B cell (primary cell): ENCODE measurements at regions of chr10 and their contacts with region 1.

Region 1: DNA sequence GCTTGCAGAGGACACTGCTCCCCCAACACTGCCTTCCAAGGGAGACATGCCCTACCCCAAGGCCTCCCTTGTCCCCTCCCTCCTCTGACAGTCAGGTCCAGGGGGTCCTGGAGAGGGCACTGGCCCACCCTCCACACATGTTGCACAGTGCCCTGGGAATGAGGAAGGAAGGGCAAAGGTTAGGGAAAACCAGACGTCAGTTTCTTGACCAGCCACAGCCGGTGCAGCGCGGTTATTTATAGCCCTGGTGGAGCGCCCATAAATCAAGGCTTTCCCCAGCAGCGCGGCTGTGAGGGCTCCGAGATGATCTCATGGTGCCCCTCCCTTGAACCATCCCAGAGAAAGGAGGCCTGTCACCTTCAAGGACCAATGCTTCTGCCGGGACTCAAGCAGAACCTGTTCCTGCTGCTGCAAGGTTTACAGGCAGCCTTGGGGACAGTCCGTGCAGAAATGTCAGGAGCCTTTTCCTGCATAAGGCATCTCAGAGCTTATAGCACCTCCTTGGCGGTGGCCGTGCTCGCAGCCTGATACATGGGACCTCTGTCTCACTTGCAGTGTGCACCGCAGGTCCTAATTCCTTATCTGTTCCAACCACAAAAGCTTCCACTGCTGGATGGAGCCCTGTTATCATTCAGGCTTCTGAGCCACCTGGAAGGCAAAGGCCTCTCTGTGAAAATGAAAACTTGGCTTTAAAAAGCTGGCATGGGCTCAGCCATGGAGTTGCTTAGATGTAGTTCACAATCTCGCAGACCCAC is 127.3 kb downstream of the LHPP start:
- DNase-seq: no peak
- ATAC-seq: peak; percentile 18
- H3K4me3 ChIP-seq: no peak overlapping the region
- H3K4me3 Mint-ChIP-seq: peak overlapping the region; percentile 45
- H3K27ac ChIP-seq: no peak overlapping the region
- H3K27ac Mint-ChIP-seq: peak overlapping the region; percentile 50
- H3K4me1 ChIP-seq: peaks cover 44 to 48% of the 10 kb centered on the region in 2 donors
- H3K4me1 Mint-ChIP-seq: peaks cover 58% of the 10 kb centered on the region
- H3K27me3 ChIP-seq: no peaks in the 10 kb centered on the region
- H3K27me3 Mint-ChIP-seq: no peaks in the 10 kb centered on the region
- CTCF ChIP-seq: no peak

Region 2: GRCh38 chr10:124418726-124419501 is 170.0 kb before region 1 on chr10 and contains the start of gene OAT:
- CTCF ChIA-PET with region 1: no interaction called
- POLR2A ChIA-PET with region 1: no interaction called
- intact Hi-C with region 1: no loop called
- DNase-seq: peak; percentile 98
- ATAC-seq: peak; percentile 97
- H3K4me3 ChIP-seq: peak within 1 kb of the TSS; percentile 26 to 83 (median 64)
- H3K4me3 Mint-ChIP-seq: peak within 1 kb of the TSS; percentile 85
- H3K27ac ChIP-seq: peak within 1 kb of the TSS; percentile 51 to 80
- H3K27ac Mint-ChIP-seq: peak within 1 kb of the TSS; percentile 84
- H3K4me1 ChIP-seq: peaks cover 10 to 13% of the 10 kb centered on the region in 2 donors
- H3K4me1 Mint-ChIP-seq: peaks cover 16% of the 10 kb centered on the region
- H3K27me3 ChIP-seq: peaks cover 0 to 23% (median 5%) of the 10 kb centered on the region in 4 experiments
- H3K27me3 Mint-ChIP-seq: peaks cover 16% of the 10 kb centered on the region
- CTCF ChIP-seq: no peak
- total RNA-seq, gene OAT: 16.9 and 20.1 TPM in 2 replicates

Region 3: DNA sequence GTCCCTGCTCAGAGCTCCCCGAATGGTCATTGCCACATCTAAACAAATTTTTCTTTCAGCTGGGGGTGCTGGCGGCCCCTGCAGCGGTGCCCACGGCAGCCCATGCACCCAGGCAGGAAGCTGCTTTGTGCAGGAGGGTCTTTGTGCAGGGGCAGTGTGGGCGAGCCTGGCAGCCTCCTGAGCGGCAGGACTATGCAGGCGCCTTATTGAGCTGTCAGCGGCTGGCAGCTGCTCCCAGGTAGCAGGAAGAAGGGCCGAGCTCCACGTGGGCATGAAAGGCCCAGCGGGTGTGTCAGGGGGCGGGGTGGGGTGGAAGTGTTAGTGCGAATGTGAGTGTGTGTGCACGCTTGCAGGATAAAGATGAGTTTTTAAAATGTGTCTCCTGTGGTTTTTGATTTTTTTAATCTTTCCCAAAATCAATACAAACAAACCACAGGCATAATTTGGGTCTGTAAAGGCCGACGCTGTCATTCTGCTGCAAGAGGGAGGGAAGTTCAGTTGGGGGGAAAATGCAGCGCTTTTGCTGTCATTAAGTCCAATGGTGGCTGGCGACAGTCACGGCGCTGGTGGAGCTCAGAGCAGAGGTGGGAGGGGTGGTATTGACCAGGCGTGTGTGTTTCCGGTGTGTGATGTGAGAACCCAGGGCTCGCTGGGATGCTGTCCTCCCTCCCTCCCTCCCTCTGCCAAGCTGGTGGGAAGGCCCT is 43.4 kb before region 1 on chr10:
- CTCF ChIA-PET with region 1: interaction called, 4 read pairs
- POLR2A ChIA-PET with region 1: interaction called, 5 read pairs
- intact Hi-C with region 1: loop called (anchors 5 kb)
- DNase-seq: no peak
- ATAC-seq: no peak
- H3K4me3 ChIP-seq: peak overlapping the region in 4 of 5 experiments; percentile 13 to 34 (median 22)
- H3K4me3 Mint-ChIP-seq: peak overlapping the region; percentile 78
- H3K27ac ChIP-seq: peak overlapping the region; percentile 64 to 70
- H3K27ac Mint-ChIP-seq: peak overlapping the region; percentile 91
- H3K4me1 ChIP-seq: peaks cover 98 to 100% of the 10 kb centered on the region in 2 donors
- H3K4me1 Mint-ChIP-seq: peaks cover 91% of the 10 kb centered on the region
- H3K27me3 ChIP-seq: no peaks in the 10 kb centered on the region
- H3K27me3 Mint-ChIP-seq: no peaks in the 10 kb centered on the region
- CTCF ChIP-seq: no peak

Region 4: GRCh38 chr10:124619195-124619594 is 30.3 kb after region 1 on chr10:
- CTCF ChIA-PET with region 1: no interaction called
- POLR2A ChIA-PET with region 1: interaction called, 8 read pairs
- intact Hi-C with region 1: loop called (anchors 5 kb)
- DNase-seq: peak; percentile 84
- ATAC-seq: peak; percentile 75
- H3K4me3 ChIP-seq: peak overlapping the region in 4 of 5 experiments; percentile 19 to 55 (median 28)
- H3K4me3 Mint-ChIP-seq: peak overlapping the region; percentile 87
- H3K27ac ChIP-seq: peak overlapping the region; percentile 97 to 98
- H3K27ac Mint-ChIP-seq: peak overlapping the region; percentile 99
- H3K4me1 ChIP-seq: peaks cover 96 to 100% of the 10 kb centered on the region in 2 donors
- H3K4me1 Mint-ChIP-seq: peaks cover 93% of the 10 kb centered on the region
- H3K27me3 ChIP-seq: no peaks in the 10 kb centered on the region
- H3K27me3 Mint-ChIP-seq: no peaks in the 10 kb centered on the region
- CTCF ChIP-seq: no peak

Region 5: DNA sequence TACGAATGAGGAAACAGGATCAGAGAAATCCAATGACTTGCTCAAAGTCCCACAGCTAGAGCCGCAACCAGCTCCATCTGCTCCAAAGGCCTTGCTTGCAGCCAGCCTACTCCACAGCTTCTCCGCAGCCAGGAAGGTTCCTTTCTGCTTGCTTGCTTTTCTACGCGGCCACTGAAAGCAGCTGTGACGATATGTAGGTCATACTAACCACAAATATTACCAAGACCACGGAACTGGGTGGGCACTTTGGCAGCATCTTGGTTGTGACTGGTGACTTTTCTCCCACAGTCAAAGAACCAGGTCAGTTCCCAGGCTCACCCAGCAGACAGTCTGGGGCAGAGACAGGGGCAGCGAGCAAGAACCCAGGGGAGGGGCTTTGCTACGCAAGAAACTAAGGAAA is 68.9 kb after region 1 on chr10:
- CTCF ChIA-PET with region 1: no interaction called
- POLR2A ChIA-PET with region 1: interaction called, 10 read pairs
- intact Hi-C with region 1: no loop called
- DNase-seq: peak; percentile 55
- ATAC-seq: peak; percentile 52
- H3K4me3 ChIP-seq: no peak overlapping the region
- H3K4me3 Mint-ChIP-seq: peak overlapping the region; percentile 47
- H3K27ac ChIP-seq: peak overlapping the region; percentile 44 to 65
- H3K27ac Mint-ChIP-seq: peak overlapping the region; percentile 87
- H3K4me1 ChIP-seq: peaks cover 75 to 84% of the 10 kb centered on the region in 2 donors
- H3K4me1 Mint-ChIP-seq: peaks cover 85% of the 10 kb centered on the region
- H3K27me3 ChIP-seq: no peaks in the 10 kb centered on the region
- H3K27me3 Mint-ChIP-seq: no peaks in the 10 kb centered on the region
- CTCF ChIP-seq: no peak